Psoas muscle (tissue), 8 donors: ENCODE measurements at regions of chr10 and their contacts with region 1.

Region 1: DNA sequence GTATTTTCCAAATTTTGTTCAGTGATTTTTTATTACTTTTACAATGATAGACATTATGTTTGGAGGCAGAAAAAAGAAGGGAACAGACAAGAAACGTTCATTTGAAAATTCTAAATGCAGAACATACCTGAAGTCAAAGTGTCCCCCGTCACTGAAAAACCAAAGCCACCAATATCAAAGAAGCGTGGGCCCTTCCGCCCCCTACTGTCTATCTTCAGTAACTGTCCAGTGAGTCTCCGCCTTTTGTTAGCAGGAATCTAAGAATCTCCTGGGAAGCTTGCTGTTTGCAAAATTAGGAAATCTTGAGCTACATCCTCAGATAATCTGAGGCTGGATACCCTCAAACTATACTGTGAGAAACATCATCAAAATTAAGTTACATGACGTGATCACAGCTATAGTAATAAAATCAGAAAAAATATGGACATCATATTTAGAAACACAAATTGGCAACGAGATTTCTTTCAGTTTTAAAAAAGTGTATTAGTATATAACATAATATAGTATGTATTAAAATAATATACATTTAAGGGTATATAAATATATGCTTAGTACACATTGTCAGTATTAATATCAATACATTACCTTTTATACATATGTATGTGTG is 169.3 kb upstream of the AKR1E2 start:
- DNase-seq: peak; percentile 40 to 63
- ATAC-seq: peak; percentile 68 to 76 (median 71)
- H3K4me3 ChIP-seq: no peak overlapping the region
- H3K27ac ChIP-seq: no peak overlapping the region
- H3K4me1 ChIP-seq: peaks cover 8% of the 10 kb centered on the region
- H3K27me3 ChIP-seq: no peaks in the 10 kb centered on the region
- CTCF ChIP-seq: peak; percentile 93

Region 2: DNA sequence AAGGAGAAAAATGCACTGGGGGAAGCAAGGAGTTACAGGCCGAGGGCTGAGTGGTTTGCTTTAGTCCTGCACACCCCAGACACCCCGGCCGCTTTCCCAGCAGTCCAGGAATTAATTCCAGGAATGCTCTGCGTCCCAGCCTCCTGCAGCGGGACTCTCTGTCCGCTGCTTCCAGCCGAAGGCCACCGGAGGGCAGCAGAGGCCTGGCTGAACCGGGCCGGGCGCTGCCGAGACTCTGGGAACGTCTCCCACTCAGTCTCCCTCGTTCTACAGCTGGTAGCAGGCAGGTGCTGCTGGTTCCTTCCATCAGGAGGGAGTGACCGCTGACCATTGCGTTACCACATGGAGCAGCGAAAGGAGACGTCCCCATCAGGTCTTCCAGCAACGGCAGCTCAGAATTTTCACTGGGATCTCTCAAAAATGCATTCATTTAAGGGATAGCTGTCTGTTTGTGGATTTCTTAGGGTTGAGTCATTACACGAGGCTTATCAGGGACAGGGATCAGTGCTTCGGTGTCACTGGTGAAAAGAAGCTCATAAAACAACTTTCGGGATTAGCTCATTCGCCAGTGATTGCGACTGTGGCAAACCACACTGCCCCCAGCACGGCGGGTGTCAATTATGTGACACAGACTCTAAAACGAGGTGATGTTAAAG is 1459.2 kb before region 1 on chr10:
- intact Hi-C with region 1: loop called in 1 of 2 experiments (anchors 5 kb)
- DNase-seq: peak; percentile 82 to 89
- ATAC-seq: peak; percentile 94 to 98 (median 96)
- H3K4me3 ChIP-seq: peak overlapping the region; percentile 33
- H3K27ac ChIP-seq: no peak overlapping the region
- H3K4me1 ChIP-seq: peaks cover 7% of the 10 kb centered on the region
- H3K27me3 ChIP-seq: no peaks in the 10 kb centered on the region
- CTCF ChIP-seq: peak; percentile 89

Region 3: GRCh38 chr10:3239066-3239919 is 1417.4 kb before region 1 on chr10:
- intact Hi-C with region 1: loop called (anchors 5 kb)
- DNase-seq: peak; percentile 72 to 83
- ATAC-seq: peak; percentile 84 to 97 (median 88)
- H3K4me3 ChIP-seq: peak overlapping the region; percentile 34
- H3K27ac ChIP-seq: peak overlapping the region; percentile 58
- H3K4me1 ChIP-seq: no peaks in the 10 kb centered on the region
- H3K27me3 ChIP-seq: peaks cover 0 to 4% (median 0%) of the 10 kb centered on the region in 3 donors
- CTCF ChIP-seq: peak; percentile 93

Region 4: GRCh38 chr10:3887885-3888476 is 768.7 kb before region 1 on chr10:
- intact Hi-C with region 1: loop called in 1 of 2 experiments (anchors 10 kb)
- DNase-seq: peak in 1 of 2 donors; percentile 47
- ATAC-seq: peak; percentile 48 to 56 (median 52)
- H3K4me3 ChIP-seq: no peak overlapping the region
- H3K27ac ChIP-seq: peak overlapping the region; percentile 80
- H3K4me1 ChIP-seq: peaks cover 20% of the 10 kb centered on the region
- H3K27me3 ChIP-seq: no peaks in the 10 kb centered on the region
- CTCF ChIP-seq: no peak

Region 5: DNA sequence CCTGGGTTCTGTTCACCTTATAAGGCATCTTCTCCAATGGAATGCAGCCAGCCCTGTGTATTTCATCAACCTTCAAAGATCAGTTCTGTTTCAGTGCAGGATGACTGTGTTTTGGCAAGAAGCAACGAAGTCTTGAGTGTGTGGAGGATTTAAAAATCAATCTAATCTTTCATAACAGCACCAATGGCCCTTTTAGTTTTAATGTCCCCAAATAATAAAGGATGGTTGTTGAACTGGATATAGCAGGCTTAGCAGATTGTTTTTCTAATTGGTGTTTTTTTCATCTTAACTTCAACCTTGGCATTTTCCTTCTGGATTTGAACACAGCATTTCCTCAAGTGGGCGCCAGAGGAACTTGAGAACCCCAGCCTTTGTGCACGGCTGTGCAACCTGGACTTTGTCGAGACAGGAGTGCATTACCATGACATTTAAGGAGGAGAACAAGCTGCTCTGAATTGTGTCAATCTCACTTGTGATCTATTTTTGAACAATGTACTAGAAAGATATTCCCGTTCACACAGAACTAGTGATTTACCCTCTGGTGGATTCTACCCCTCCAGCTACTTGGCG is 143.9 kb before region 1 on chr10:
- intact Hi-C with region 1: loop called in 1 of 2 experiments (anchors 10 kb)
- DNase-seq: no peak
- ATAC-seq: peak in 1 of 4 donors; percentile 41
- H3K4me3 ChIP-seq: no peak overlapping the region
- H3K27ac ChIP-seq: no peak overlapping the region
- H3K4me1 ChIP-seq: no peaks in the 10 kb centered on the region
- H3K27me3 ChIP-seq: no peaks in the 10 kb centered on the region
- CTCF ChIP-seq: peak; percentile 23

Region 6: DNA sequence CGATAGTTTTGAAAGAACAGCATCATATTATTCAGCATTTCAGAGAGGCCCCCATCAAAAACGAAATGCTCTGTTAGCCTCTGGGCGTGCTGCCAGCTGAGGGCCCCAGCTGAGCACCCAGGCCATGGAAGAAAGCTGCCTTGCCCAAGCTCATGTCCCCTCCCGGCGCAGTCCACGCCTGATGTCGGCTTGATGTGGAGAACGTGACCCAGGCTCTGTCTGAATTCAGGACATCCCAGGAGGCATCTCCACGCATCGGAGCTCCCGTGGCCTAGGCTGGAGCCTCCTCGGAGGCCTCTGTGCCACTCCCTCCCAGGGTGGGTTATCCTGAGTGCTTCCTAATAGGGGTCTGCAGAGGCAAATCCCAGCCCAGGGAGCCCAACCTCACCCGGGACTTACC is 49.0 kb before region 1 on chr10:
- intact Hi-C with region 1: no loop called
- DNase-seq: no peak
- ATAC-seq: no peak
- H3K4me3 ChIP-seq: no peak overlapping the region
- H3K27ac ChIP-seq: no peak overlapping the region
- H3K4me1 ChIP-seq: no peaks in the 10 kb centered on the region
- H3K27me3 ChIP-seq: no peaks in the 10 kb centered on the region
- CTCF ChIP-seq: no peak

Region 7: DNA sequence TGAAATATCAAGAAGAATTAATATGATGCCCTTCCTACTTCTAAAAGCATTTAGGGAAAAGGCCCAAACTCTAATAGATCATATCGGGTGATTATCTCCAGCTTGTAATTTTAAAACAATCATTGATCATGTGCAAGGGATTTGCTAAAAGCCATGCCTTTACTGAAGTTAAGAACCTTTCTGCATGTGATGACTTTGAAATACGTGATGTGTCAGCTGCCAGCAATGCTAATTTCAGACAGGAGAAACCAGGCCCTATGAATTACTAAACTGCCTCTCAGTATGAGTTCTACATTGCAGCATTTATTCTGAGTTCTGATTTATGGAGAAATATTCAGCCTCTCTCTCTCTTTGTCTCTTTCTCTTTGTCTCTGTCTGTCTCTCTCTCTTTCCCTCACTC is 34.3 kb before region 1 on chr10:
- intact Hi-C with region 1: no loop called
- DNase-seq: no peak
- ATAC-seq: no peak
- H3K4me3 ChIP-seq: no peak overlapping the region
- H3K27ac ChIP-seq: no peak overlapping the region
- H3K4me1 ChIP-seq: no peaks in the 10 kb centered on the region
- H3K27me3 ChIP-seq: no peaks in the 10 kb centered on the region
- CTCF ChIP-seq: no peak